Activated B cell treated with CpG ODN at 0.5 μM for 24 hours (primary cell): ENCODE measurements at regions of chr3 and their contacts with region 1.

Region 1: DNA sequence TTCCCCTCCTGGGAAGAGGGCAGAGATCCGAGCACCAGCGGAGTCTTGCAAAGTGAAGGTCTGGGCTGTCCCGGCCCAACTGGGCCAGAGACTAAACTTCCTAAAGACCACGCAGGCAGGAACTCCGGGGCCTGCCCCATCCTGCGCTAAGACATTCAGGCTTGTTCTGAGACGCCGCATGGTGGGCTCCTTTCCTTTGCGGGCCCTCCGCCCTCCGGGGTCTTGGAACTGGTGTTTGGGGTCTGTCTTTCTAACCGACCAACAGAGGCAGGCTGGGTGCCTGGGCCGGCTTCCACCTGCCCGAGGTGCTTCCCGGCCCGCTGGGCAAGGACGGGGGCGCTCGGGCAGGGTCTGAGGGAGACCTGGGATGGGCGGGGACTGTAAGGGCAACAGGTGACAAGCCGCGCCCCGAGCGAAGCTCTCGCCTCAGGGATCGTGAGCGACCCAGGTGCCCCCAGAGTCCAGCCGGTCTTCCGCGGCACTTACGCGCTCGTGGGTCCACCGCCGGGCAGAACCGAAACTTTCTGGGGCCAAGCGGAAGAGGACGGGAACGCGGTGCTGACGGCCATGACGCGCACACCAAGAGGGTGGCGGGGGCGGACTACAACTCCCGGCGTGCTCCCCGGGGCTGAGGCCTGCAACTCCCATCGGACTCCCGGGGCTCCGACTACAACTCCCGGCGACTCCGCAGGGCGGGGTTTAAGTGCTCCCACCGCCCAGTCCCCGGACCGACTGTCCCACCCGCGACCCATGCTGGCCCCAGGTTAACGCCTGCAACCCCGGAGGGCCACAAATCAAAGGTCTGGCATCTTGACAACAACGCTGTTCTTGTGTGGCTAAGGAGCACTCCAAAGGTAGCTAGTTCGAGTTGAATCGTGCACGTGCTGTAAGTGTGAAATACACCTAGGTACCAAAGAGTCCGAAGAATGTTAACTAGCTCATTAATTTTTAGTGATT is at the start of gene FYCO1:
- DNase-seq: peak; percentile 82
- ATAC-seq: peak; percentile 97
- H3K4me3 Mint-ChIP-seq: peak within 1 kb of the TSS; percentile 89
- H3K27ac Mint-ChIP-seq: peak within 1 kb of the TSS; percentile 89
- H3K4me1 Mint-ChIP-seq: peaks cover 41% of the 10 kb centered on the region
- H3K27me3 Mint-ChIP-seq: no peaks in the 10 kb centered on the region
- CTCF ChIP-seq: no peak
- total RNA-seq, gene FYCO1: 10.6 and 14.9 TPM in 2 replicates

Region 2: GRCh38 chr3:45981321-45982074 is 14.0 kb before region 1 on chr3:
- CTCF ChIA-PET with region 1: interaction called, 3 read pairs
- POLR2A ChIA-PET with region 1: interaction called, 9 read pairs
- intact Hi-C with region 1: loop called (anchors 1 kb)
- DNase-seq: no peak
- ATAC-seq: peak; percentile 82
- H3K4me3 Mint-ChIP-seq: peak overlapping the region; percentile 60
- H3K27ac Mint-ChIP-seq: peak overlapping the region; percentile 75
- H3K4me1 Mint-ChIP-seq: peaks cover 27% of the 10 kb centered on the region
- H3K27me3 Mint-ChIP-seq: no peaks in the 10 kb centered on the region
- CTCF ChIP-seq: no peak